Mammary epithelial cell (primary cell): ENCODE measurements at regions of chr7 and their contacts with region 1.

Region 1: GRCh38 chr7:140696680-140697446 is at the start of gene NDUFB2:
- DNase-seq: peak; percentile 91
- H3K4me3 ChIP-seq: peak within 1 kb of the TSS; percentile 76 to 100 (median 95)
- H3K27ac ChIP-seq: peak within 1 kb of the TSS; percentile 71
- H3K4me1 ChIP-seq: peaks cover 16% of the 10 kb centered on the region
- H3K27me3 ChIP-seq: no peaks in the 10 kb centered on the region
- CTCF ChIP-seq: no peak
- total RNA-seq, gene NDUFB2: 77.0 to 195 TPM

Region 2: DNA sequence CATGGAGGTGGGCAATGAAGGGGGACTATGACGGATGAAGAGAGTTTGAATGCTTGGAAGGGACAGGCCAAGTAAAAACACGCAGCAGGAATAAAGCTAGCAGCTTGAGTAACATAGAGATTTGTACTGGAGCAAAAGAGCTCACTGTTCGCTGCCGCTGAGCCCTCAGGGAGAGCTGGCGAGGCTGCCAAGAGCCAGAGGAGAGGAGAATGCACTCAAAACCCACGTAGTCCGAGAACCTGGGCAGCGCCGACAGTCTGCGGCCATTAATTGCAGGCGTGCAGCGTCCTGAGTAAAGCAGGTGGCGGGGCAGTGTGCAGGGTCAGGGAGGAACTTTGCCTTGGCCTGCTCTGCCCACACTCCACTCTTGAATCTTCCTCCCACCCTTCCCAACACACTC is 366.7 kb before region 1 on chr7:
- CTCF ChIA-PET with region 1: no interaction called
- dilution Hi-C with region 1: no loop called
- in situ Hi-C with region 1: no loop called
- intact Hi-C with region 1: no loop called
- DNase-seq: no peak
- H3K4me3 ChIP-seq: no peak overlapping the region
- H3K27ac ChIP-seq: no peak overlapping the region
- H3K4me1 ChIP-seq: no peaks in the 10 kb centered on the region
- H3K27me3 ChIP-seq: no peaks in the 10 kb centered on the region
- CTCF ChIP-seq: no peak

Region 3: GRCh38 chr7:140673063-140673773 is 23.6 kb before region 1 on chr7:
- CTCF ChIA-PET with region 1: no interaction called
- dilution Hi-C with region 1: no loop called
- in situ Hi-C with region 1: no loop called
- intact Hi-C with region 1: loop called (anchors 1 kb)
- DNase-seq: peak; percentile 56
- H3K4me3 ChIP-seq: peak overlapping the region; percentile 53 to 69 (median 64)
- H3K27ac ChIP-seq: no peak overlapping the region
- H3K4me1 ChIP-seq: peaks cover 26% of the 10 kb centered on the region
- H3K27me3 ChIP-seq: no peaks in the 10 kb centered on the region
- CTCF ChIP-seq: peak in 1 of 2 donors; percentile 3

Region 4: DNA sequence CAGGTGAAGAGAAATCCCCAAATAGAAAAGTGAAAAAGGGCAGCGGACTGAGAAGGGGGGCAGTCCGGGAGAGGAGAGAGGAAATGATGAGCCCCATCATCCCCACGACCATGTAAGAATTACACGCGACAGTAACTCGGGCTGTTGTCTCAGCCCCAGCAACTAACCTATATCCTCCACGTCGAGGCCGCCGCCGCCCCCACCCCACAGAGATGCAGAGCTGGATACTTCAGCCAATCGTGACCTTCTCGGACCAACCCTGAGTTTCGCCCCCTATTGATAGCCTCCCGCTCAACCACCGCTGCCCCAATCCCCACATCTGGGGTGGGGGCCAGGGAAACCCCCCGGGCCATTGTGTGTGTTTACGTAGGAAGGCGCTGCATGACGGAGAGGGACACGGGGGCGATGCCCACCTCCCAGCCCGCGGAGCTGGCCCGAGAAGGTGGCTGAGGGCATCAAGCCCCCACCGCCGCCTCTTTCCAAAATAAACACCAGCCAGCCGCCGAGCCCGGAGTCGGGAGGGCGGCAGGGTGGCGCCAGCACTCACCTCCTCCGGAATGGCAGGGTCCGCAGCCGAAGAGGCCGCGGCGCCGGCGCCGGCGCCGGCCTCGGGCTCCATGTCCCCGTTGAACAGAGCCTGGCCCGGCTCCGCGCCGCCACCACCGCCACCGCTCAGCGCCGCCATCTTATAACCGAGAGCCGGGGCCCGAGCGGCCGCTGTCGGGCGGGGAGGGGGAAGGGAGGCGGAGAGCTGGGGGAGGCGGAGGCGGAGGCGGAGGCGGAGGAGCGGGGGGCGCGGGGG is 227.4 kb after region 1 on chr7:
- CTCF ChIA-PET with region 1: no interaction called
- dilution Hi-C with region 1: no loop called
- in situ Hi-C with region 1: no loop called
- intact Hi-C with region 1: loop called (anchors 10 kb)
- DNase-seq: peak; percentile 60
- H3K4me3 ChIP-seq: peak overlapping the region; percentile 75 to 89 (median 83)
- H3K27ac ChIP-seq: peak overlapping the region; percentile 90
- H3K4me1 ChIP-seq: peaks cover 4% of the 10 kb centered on the region
- H3K27me3 ChIP-seq: no peaks in the 10 kb centered on the region
- CTCF ChIP-seq: peak in 1 of 2 donors; percentile 44

Region 5: DNA sequence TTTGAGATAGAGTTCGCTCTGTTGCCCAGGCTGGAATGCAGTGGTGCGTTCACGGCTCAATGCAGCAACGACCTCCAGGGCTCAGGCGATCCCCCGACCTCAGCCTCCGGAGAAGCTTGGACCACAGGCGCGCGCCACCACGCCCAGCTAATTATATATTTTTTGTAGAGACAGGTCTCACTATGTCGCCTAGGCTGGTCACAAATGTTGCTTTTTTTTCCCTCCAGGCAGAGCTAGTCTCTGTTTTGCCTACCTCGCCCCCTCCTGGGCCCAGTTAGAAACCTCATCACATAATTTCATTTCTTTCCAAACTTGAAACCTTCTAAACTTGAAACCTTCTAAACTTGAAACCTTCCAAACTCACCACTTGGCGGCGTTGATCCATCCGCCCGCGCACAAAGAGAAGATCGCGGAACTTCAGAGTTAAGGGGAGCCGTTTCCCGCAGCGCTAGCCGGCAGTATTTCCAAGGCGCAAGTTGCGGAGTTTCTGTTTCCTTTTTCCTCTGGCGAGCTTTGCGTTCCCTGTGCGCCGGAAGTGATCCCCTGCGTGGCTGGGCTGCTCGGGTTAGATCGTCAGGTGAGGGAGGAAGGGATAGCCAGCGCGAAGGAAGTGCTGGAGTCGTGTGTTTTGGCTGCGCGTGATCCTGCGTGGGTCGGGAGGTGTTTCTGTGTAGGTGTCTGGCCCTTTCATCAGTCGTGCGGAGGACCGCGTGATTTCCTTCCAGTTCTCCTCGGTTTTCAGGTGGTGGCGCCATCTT is 1041.2 kb after region 1 on chr7 and contains the start of gene SSBP1:
- CTCF ChIA-PET with region 1: no interaction called
- dilution Hi-C with region 1: no loop called
- in situ Hi-C with region 1: no loop called
- intact Hi-C with region 1: loop called (anchors 10 kb)
- DNase-seq: peak; percentile 94
- H3K4me3 ChIP-seq: peak within 1 kb of the TSS; percentile 95 to 98 (median 97)
- H3K27ac ChIP-seq: peak within 1 kb of the TSS; percentile 87
- H3K4me1 ChIP-seq: peaks cover 11% of the 10 kb centered on the region
- H3K27me3 ChIP-seq: no peaks in the 10 kb centered on the region
- CTCF ChIP-seq: peak; percentile 75 to 86
- total RNA-seq, gene SSBP1: 81.0 to 163 TPM